ENCODE measurements at regions of chrX and their contacts with region 1.

Region 1: DNA sequence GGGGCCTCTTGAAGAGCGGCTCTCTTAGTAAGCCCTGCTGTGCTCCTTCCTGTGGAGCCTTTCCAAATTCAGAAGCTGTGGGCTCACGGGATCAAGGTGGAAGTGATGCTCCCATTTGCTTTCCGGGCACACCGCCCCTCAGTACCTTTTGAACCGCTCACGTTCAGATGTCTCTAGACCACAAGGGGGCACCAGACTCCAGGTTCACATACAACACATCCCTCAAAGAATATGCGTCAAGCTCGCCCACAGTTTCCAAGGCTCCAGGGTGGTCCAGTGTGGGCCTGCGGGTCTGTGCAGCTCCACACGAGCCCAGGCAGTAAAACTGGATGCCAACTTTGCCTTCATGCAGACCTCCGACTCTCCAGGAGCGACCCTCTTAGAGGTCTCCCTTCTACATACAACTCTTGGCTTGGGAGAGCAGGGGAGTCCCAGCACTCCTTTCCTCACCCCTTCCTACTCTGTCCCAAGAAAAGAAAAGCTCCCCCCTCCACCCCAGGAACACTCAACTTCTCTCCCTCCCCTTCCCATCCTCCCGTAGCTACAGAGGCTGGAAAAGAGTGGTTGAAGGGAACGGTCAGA is 11.0 kb downstream of the SUPT20HL1 start:
- DNase-seq: peak; percentile 48
- H3K4me3 ChIP-seq: no peak overlapping the region
- H3K27ac ChIP-seq: no peak overlapping the region
- H3K4me1 ChIP-seq: no peaks in the 10 kb centered on the region
- H3K27me3 ChIP-seq: no peaks in the 10 kb centered on the region
- CTCF ChIP-seq: peak; percentile 48 to 62
- POLR2A ChIP-seq: no peak

Region 2: GRCh38 chrX:24294620-24295019 is 76.9 kb before region 1 on chrX:
- CTCF ChIA-PET with region 1: interaction called, 33 read pairs
- POLR2A ChIA-PET with region 1: no interaction called
- dilution Hi-C with region 1: no loop called
- intact Hi-C with region 1: loop called (anchors 5 kb)
- DNase-seq: peak; percentile 22
- H3K4me3 ChIP-seq: no peak overlapping the region
- H3K27ac ChIP-seq: no peak overlapping the region
- H3K4me1 ChIP-seq: peaks cover 5% of the 10 kb centered on the region
- H3K27me3 ChIP-seq: no peaks in the 10 kb centered on the region
- CTCF ChIP-seq: peak; percentile 11 to 12
- POLR2A ChIP-seq: no peak

Region 3: GRCh38 chrX:24395775-24396174 is 24.3 kb after region 1 on chrX:
- CTCF ChIA-PET with region 1: interaction called, 17 read pairs
- POLR2A ChIA-PET with region 1: no interaction called
- dilution Hi-C with region 1: no loop called
- intact Hi-C with region 1: no loop called
- DNase-seq: peak; percentile 68
- H3K4me3 ChIP-seq: no peak overlapping the region
- H3K27ac ChIP-seq: no peak overlapping the region
- H3K4me1 ChIP-seq: no peaks in the 10 kb centered on the region
- H3K27me3 ChIP-seq: peaks cover 0 to 4% of the 10 kb centered on the region in 2 experiments
- CTCF ChIP-seq: peak; percentile 43 to 46
- POLR2A ChIP-seq: no peak

Region 4: DNA sequence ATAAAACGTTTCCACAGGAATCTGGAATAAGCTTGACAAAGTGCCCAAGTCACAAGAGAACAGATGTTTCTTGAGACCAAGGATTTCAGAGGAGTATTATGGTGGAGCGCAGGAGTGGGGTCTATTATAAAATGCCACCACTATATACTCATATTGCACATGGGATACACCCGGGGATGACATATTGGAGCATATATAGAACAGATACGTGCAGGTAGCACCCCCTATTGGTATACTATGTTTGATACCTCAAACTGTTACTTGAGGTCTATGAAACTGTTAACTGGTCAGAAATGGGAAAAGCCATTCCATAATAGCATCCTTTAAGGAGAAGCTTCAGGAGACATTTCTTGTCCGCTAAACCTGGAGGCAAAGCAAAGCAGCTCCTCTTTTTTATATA is 189.6 kb after region 1 on chrX:
- CTCF ChIA-PET with region 1: interaction called, 4 read pairs
- POLR2A ChIA-PET with region 1: no interaction called
- dilution Hi-C with region 1: no loop called
- intact Hi-C with region 1: loop called (anchors 1 kb)
- DNase-seq: peak; percentile 44
- H3K4me3 ChIP-seq: no peak overlapping the region
- H3K27ac ChIP-seq: no peak overlapping the region
- H3K4me1 ChIP-seq: no peaks in the 10 kb centered on the region
- H3K27me3 ChIP-seq: no peaks in the 10 kb centered on the region
- CTCF ChIP-seq: peak in 1 of 2 donors; percentile 24
- POLR2A ChIP-seq: no peak